Calu3 (cell line): ENCODE measurements at regions of chr4 and their contacts with region 1.

Region 1: GRCh38 chr4:105715692-105716278 is 7.2 kb downstream of the GSTCD start:
- DNase-seq: no peak
- H3K4me3 Mint-ChIP-seq: no peak overlapping the region
- H3K27ac Mint-ChIP-seq: no peak overlapping the region
- H3K4me1 Mint-ChIP-seq: peaks cover 14% of the 10 kb centered on the region
- H3K27me3 Mint-ChIP-seq: no peaks in the 10 kb centered on the region
- CTCF ChIP-seq: no peak

Region 2: GRCh38 chr4:105496899-105497298 is 218.9 kb before region 1 on chr4:
- CTCF ChIA-PET with region 1: no interaction called
- intact Hi-C with region 1: loop called (anchors 2 kb)
- DNase-seq: peak; percentile 15
- H3K4me3 Mint-ChIP-seq: no peak overlapping the region
- H3K27ac Mint-ChIP-seq: no peak overlapping the region
- H3K4me1 Mint-ChIP-seq: no peaks in the 10 kb centered on the region
- H3K27me3 Mint-ChIP-seq: no peaks in the 10 kb centered on the region
- CTCF ChIP-seq: no peak

Region 3: GRCh38 chr4:105520817-105521790 is 194.7 kb before region 1 on chr4:
- CTCF ChIA-PET with region 1: interaction called, 10 read pairs
- intact Hi-C with region 1: loop called (anchors 1 kb)
- DNase-seq: peak; percentile 55
- H3K4me3 Mint-ChIP-seq: no peak overlapping the region
- H3K27ac Mint-ChIP-seq: no peak overlapping the region
- H3K4me1 Mint-ChIP-seq: no peaks in the 10 kb centered on the region
- H3K27me3 Mint-ChIP-seq: no peaks in the 10 kb centered on the region
- CTCF ChIP-seq: peak; percentile 55

Region 4: GRCh38 chr4:105895583-105896460 is 180.0 kb after region 1 on chr4:
- CTCF ChIA-PET with region 1: interaction called, 3 read pairs
- intact Hi-C with region 1: loop called (anchors 10 kb)
- DNase-seq: peak; percentile 53
- H3K4me3 Mint-ChIP-seq: peak overlapping the region; percentile 74
- H3K27ac Mint-ChIP-seq: peak overlapping the region; percentile 21
- H3K4me1 Mint-ChIP-seq: peaks cover 49% of the 10 kb centered on the region
- H3K27me3 Mint-ChIP-seq: no peaks in the 10 kb centered on the region
- CTCF ChIP-seq: no peak

Region 5: DNA sequence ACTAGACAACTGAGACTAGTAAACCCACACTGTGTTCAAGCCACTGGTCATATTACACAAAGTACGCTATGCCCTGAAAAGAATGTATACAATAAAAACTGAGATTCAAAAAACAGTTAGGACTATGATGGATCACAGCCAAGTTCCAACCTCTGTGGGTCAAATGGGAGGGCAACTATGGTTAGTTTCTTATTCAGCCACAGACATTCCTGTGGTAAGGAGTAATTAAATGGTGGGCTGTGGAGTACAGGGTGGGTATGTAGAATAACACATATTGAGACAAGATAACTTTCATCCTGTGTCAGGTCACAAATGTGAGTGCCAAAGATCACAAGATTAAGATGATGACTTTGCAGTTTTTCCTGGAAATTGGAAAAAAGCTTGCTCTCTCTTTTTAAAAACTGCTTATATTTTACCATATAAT is 346.7 kb after region 1 on chr4:
- CTCF ChIA-PET with region 1: no interaction called
- intact Hi-C with region 1: loop called (anchors 10 kb)
- DNase-seq: peak; percentile 20
- H3K4me3 Mint-ChIP-seq: no peak overlapping the region
- H3K27ac Mint-ChIP-seq: no peak overlapping the region
- H3K4me1 Mint-ChIP-seq: peaks cover 23% of the 10 kb centered on the region
- H3K27me3 Mint-ChIP-seq: no peaks in the 10 kb centered on the region
- CTCF ChIP-seq: no peak

Region 6: GRCh38 chr4:106201373-106201772 is 485.6 kb after region 1 on chr4:
- CTCF ChIA-PET with region 1: no interaction called
- intact Hi-C with region 1: loop called (anchors 5 kb)
- DNase-seq: no peak
- H3K4me3 Mint-ChIP-seq: no peak overlapping the region
- H3K27ac Mint-ChIP-seq: no peak overlapping the region
- H3K4me1 Mint-ChIP-seq: no peaks in the 10 kb centered on the region
- H3K27me3 Mint-ChIP-seq: no peaks in the 10 kb centered on the region
- CTCF ChIP-seq: no peak